Activated B cell treated with CpG ODN at 0.5 μM for 24 hours (primary cell): ENCODE measurements at regions of chr6 and their contacts with region 1.

Region 1: GRCh38 chr6:28838634-28839442 is 84.9 kb downstream of the TRIM27 start:
- DNase-seq: peak; percentile 68
- ATAC-seq: peak; percentile 79
- H3K4me3 Mint-ChIP-seq: peak overlapping the region; percentile 92
- H3K27ac Mint-ChIP-seq: peak overlapping the region; percentile 89
- H3K4me1 Mint-ChIP-seq: peaks cover 24% of the 10 kb centered on the region
- H3K27me3 Mint-ChIP-seq: peaks cover 25% of the 10 kb centered on the region
- CTCF ChIP-seq: no peak

Region 2: DNA sequence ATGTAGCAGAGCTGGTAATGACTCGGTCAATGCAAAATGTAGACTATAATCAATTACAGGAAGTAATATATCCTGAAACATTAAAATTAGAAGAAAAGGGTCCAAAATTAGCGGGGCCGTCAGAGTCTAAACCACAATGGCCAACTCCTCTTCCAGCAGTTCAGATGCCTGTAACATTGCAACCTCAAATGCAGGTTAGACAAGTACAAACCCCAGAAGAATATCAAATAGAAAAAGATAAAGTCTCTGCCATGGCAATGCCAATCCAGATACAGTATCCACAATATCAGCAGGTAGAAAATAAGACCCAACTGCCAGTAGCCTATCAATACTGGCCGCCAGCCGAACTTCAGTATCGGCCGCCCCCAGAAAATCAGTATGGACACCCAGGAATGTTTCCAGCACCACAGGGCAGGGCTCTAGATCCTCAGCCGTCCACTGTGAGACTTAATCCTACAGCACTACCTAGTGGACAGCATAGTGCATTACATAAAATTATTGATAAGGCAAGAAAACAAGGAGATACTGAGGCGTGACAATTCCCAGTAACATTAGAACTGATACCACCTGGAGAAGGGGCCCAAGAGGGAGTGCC is 154.8 kb before region 1 on chr6:
- CTCF ChIA-PET with region 1: interaction called, 8 read pairs
- POLR2A ChIA-PET with region 1: no interaction called
- intact Hi-C with region 1: loop called (anchors 5 kb)
- DNase-seq: no peak
- ATAC-seq: no peak
- H3K4me3 Mint-ChIP-seq: no peak overlapping the region
- H3K27ac Mint-ChIP-seq: no peak overlapping the region
- H3K4me1 Mint-ChIP-seq: peaks cover 3% of the 10 kb centered on the region
- H3K27me3 Mint-ChIP-seq: peaks cover 66% of the 10 kb centered on the region
- CTCF ChIP-seq: no peak

Region 3: GRCh38 chr6:28816909-28817807 is 21.7 kb before region 1 on chr6:
- CTCF ChIA-PET with region 1: no interaction called
- POLR2A ChIA-PET with region 1: no interaction called
- intact Hi-C with region 1: no loop called
- DNase-seq: no peak
- ATAC-seq: no peak
- H3K4me3 Mint-ChIP-seq: no peak overlapping the region
- H3K27ac Mint-ChIP-seq: no peak overlapping the region
- H3K4me1 Mint-ChIP-seq: peaks cover 6% of the 10 kb centered on the region
- H3K27me3 Mint-ChIP-seq: peaks cover 69% of the 10 kb centered on the region
- CTCF ChIP-seq: no peak

Region 4: DNA sequence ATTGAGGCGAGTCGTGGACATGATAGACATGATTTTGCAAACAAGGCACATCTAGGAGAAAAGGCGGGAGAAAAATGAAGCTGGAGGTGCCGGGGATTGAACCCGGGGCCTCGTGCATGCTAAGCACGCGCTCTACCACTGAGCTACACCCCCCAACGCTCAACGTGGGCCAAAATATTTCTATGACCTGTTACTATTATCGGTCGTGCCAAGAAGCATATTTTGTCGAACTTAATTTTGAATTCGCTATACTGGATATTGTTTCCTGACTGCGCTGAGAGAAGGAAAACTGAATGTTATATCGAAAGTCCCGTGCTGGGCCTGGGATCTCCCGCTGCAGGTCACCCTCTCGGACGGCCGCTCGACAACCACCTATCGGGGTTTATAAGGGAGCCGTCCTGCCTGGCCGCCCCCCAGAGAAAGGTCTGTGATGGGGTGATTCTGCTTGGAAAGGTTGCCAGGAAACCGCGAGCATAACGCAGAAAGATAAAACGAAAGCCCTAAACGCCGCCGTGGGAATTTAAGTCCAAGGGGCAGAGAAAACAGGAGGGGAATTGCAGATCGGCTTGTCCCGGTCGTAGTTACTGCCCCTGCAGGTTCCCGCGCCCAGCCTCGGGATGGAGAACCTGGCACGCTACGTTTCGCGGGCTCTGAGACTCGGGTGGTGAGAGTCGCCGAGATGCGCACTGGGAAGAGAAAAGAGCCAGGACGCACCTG is 24.9 kb after region 1 on chr6:
- CTCF ChIA-PET with region 1: interaction called, 19 read pairs
- POLR2A ChIA-PET with region 1: interaction called, 6 read pairs
- intact Hi-C with region 1: loop called (anchors 1 kb)
- DNase-seq: peak; percentile 54
- ATAC-seq: peak; percentile 30
- H3K4me3 Mint-ChIP-seq: peak overlapping the region; percentile 85
- H3K27ac Mint-ChIP-seq: peak overlapping the region; percentile 90
- H3K4me1 Mint-ChIP-seq: peaks cover 27% of the 10 kb centered on the region
- H3K27me3 Mint-ChIP-seq: peaks cover 4% of the 10 kb centered on the region
- CTCF ChIP-seq: no peak

Region 5: DNA sequence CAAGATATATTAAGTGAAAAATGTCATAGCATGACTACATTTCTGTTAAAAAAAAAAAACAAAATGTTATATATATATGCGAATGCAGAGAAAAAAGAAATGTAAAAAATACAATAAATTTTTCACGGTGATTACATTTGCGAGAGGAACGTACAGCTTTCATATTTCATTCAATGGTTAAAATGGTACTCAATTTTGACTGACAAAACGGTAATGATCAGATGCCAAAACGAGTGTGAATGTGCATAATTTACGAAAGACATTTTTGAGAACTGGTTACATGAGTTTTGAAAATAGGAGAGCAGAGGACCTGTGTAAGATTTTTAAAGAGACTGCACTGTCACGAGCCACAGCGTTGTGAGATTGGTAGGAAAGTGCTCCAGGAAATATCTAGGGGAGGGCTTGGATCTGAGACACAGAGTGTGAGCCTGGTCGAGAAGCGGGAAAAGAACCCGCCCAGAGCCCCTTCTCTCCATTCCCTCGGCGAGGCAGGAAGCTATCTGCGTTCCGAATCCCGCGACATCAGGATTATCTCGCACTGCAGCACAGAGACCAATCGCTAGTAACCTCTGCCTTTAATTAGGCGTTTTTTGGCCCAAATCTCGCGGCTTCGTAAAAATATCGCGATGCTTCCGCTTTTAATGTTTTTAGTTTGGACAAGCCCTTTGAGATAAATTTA is 56.4 kb after region 1 on chr6:
- CTCF ChIA-PET with region 1: interaction called, 5 read pairs
- POLR2A ChIA-PET with region 1: interaction called, 6 read pairs
- intact Hi-C with region 1: loop called (anchors 1 kb)
- DNase-seq: peak; percentile 66
- ATAC-seq: peak; percentile 66
- H3K4me3 Mint-ChIP-seq: peak overlapping the region; percentile 97
- H3K27ac Mint-ChIP-seq: peak overlapping the region; percentile 99
- H3K4me1 Mint-ChIP-seq: peaks cover 23% of the 10 kb centered on the region
- H3K27me3 Mint-ChIP-seq: peaks cover 3% of the 10 kb centered on the region
- CTCF ChIP-seq: no peak

Region 6: GRCh38 chr6:28940858-28941680 is 102.2 kb after region 1 on chr6:
- CTCF ChIA-PET with region 1: interaction called, 5 read pairs
- POLR2A ChIA-PET with region 1: interaction called, 4 read pairs
- intact Hi-C with region 1: loop called (anchors 1 kb)
- DNase-seq: peak; percentile 36
- ATAC-seq: peak; percentile 66
- H3K4me3 Mint-ChIP-seq: peak overlapping the region; percentile 95
- H3K27ac Mint-ChIP-seq: peak overlapping the region; percentile 88
- H3K4me1 Mint-ChIP-seq: peaks cover 47% of the 10 kb centered on the region
- H3K27me3 Mint-ChIP-seq: peaks cover 3% of the 10 kb centered on the region
- CTCF ChIP-seq: no peak

Region 7: DNA sequence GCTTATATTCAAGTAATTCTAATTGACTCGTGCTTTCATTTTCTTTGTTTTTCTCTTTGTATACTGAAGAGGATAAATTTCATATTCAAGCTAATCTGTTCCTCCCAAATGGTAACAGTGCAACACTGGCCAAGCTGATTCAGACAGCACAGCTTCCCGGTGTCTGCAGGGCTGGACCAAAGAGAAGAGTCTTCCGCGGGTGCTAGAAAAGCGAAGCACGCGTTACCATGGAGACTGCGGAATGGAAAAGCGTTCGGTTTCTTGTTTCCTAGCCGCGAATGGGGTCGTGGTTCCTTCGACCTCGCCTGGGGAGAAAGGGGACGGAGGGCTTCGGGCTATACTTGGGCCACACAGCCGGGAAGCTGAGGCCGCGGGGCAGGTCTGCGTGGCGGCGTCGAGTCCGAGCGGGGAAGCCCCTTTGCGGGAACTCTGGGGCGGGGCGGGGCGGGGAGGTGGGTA is 172.5 kb after region 1 on chr6:
- CTCF ChIA-PET with region 1: interaction called, 78 read pairs
- POLR2A ChIA-PET with region 1: no interaction called
- intact Hi-C with region 1: no loop called
- DNase-seq: no peak
- ATAC-seq: peak; percentile 31
- H3K4me3 Mint-ChIP-seq: peak overlapping the region; percentile 82
- H3K27ac Mint-ChIP-seq: peak overlapping the region; percentile 15
- H3K4me1 Mint-ChIP-seq: peaks cover 11% of the 10 kb centered on the region
- H3K27me3 Mint-ChIP-seq: peaks cover 44% of the 10 kb centered on the region
- CTCF ChIP-seq: no peak

Region 8: DNA sequence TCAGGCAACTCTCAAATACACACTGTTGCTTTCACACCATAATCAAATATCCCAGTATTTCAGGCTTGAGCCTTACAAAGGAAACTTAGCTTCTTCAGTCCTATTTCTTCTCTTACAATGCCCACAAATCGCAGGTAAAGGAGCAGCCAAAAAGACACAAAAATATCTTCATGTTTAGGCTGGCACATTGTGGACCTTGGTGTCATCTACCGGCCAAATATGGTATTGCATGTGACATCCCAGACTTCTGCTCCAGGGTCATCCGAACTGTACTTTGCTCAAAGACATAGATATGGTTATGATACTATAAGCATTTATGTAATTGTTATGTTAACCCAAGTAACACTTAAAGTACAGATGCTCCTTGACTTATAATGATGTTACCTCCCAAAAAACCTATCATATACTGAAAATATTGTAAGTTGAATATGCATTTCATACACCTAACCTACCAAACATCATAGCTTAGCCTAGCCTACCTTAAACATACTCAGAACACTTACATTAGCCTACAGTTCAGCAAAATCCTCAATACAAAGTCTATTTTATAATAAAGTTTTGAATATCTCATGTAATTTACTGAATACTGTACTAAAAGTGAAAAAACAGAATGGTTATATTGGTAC is 750.7 kb after region 1 on chr6:
- CTCF ChIA-PET with region 1: interaction called, 4 read pairs
- POLR2A ChIA-PET with region 1: no interaction called
- intact Hi-C with region 1: loop called (anchors 1 kb)
- DNase-seq: no peak
- ATAC-seq: peak; percentile 77
- H3K4me3 Mint-ChIP-seq: no peak overlapping the region
- H3K27ac Mint-ChIP-seq: no peak overlapping the region
- H3K4me1 Mint-ChIP-seq: peaks cover 2% of the 10 kb centered on the region
- H3K27me3 Mint-ChIP-seq: peaks cover 16% of the 10 kb centered on the region
- CTCF ChIP-seq: peak; percentile 79